Sciatic nerve (tissue), 2 donors: ENCODE measurements at regions of chr11 and their contacts with region 1.

Region 1: DNA sequence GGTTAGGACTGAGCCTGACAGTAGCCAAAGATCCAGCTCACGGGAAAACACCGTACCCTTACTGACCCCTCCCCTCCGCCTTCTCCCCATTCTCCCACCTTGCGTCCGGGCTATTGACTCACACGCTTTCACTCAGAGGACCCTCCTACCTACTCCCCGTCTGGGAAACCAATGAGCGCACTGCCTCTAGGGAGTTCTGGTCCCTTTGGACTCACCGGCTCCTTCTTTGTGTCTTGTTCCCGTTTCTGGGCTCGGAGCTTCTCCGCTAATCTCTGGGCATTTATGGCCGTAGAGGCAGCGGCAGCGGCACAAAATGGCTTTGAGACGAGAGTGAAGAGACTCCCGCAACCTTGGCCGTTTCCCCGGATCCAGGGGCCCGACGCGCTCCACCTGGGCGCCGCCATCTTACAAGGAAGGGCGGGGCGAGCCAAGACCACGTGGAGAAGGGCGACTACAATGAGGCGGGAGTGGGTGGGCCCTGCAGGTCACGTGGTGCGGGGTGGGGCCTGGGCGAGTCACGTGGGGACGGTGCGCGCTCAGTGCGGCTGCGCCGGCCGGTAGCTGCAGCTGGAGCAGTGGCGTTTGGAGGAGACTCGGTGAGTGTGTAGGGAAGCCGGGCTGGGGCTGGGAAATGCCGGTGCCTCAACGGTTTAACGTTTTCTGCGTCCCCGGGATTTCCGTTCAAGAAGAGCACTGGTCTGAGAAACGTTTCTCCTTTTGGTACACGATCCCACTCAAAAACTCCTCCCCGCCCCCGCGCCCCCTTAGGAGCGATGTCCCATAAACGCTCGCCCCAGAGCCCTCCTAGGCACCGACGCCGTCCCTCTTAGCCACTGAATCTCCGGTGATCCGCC is at the starts of genes FAM118B and RPUSD4:
- DNase-seq: peak; percentile 99
- ATAC-seq: peak; percentile 100
- total RNA-seq, gene FAM118B: 19.4 TPM
- total RNA-seq, gene RPUSD4: 21.0 TPM

Region 2: GRCh38 chr11:125941619-125942611 is 269.5 kb before region 1 on chr11:
- intact Hi-C with region 1: no loop called
- DNase-seq: peak; percentile 70
- ATAC-seq: peak; percentile 62

Region 3: GRCh38 chr11:126157326-126158030 is 54.0 kb before region 1 on chr11:
- intact Hi-C with region 1: loop called (anchors 2 kb)
- DNase-seq: no peak
- ATAC-seq: no peak

Region 4: GRCh38 chr11:126265811-126266210 is 54.3 kb after region 1 on chr11:
- intact Hi-C with region 1: loop called (anchors 2 kb)
- DNase-seq: no peak
- ATAC-seq: no peak

Region 5: DNA sequence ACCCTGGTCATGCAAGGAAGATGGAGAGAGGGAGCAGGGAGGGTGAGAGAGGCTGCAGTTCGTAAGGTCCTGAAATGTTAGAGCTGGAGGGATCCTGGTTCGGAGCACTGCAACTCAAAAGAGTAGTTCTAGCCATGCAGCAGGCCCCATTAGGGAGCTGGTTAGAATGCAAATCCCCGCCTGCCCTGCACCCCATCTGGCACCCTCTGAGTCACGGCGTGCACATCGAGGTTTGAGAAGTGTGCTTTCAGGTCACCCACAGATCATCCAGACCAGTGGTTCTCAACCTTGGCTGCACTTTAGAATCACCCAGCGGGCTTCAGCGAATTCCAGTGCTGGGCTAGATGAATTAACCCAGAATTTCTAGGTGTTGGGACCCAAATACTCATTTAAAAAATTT is 192.2 kb after region 1 on chr11:
- intact Hi-C with region 1: no loop called
- DNase-seq: no peak
- ATAC-seq: peak; percentile 14